Esophagus muscularis mucosa (tissue), 4 donors: ENCODE measurements at regions of chr10 and their contacts with region 1.

Region 1: DNA sequence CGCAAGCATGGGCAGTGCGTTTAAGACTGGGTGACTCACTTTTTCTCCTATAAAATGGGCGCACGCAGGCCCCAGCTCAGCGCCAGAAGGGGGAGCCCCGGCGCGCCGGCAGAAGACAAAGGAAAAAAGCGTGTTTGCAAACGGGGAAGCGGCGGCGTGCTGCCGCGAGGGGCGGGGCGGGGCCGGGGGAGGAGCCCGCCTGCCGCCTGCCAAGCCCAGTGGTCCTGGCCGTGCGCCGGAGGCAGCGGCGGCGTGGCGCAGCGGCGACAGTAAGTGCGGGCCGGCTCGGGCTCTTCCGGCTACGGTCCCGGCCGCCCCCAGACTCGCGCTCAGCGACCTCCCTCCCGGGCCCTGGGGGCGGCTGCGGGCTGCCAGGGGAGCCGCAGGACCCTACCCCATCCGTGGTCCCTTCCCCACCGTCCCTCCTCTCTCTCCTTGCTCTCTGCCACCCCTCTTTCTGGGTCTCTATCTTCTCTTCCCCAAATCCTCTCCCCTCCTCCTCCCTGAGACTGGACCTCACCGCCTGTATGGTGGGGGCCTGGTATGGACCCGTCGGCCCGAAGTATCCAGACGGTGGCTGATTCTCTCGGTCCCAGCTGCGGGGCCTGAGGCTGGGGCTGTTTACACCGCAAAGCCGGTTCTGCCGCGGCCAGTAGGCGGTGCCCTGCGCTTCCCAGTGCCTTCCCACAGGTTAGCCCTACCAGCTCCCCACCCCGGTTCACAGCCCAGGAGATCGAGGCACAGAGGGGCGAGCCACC is at the start of gene SLC29A3:
- DNase-seq: no peak
- H3K4me3 ChIP-seq: peak within 1 kb of the TSS; percentile 71 to 93 (median 84)
- H3K27ac ChIP-seq: peak within 1 kb of the TSS; percentile 81 to 87 (median 85)
- H3K4me1 ChIP-seq: peaks cover 14 to 29% (median 23%) of the 10 kb centered on the region in 4 donors
- H3K27me3 ChIP-seq: no peaks in the 10 kb centered on the region
- CTCF ChIP-seq: peak; percentile 53 to 70 (median 67)
- EP300 ChIP-seq: no peak
- POLR2A ChIP-seq: no peak
- total RNA-seq, gene SLC29A3: 4.0 to 6.9 (median 5.0) TPM

Region 2: GRCh38 chr10:71378336-71379117 is 59.3 kb after region 1 on chr10:
- intact Hi-C with region 1: loop called (anchors 5 kb)
- DNase-seq: no peak
- H3K4me3 ChIP-seq: no peak overlapping the region
- H3K27ac ChIP-seq: peak overlapping the region in 3 of 4 donors; percentile 1 to 88 (median 83)
- H3K4me1 ChIP-seq: peaks cover 6 to 16% (median 11%) of the 10 kb centered on the region in 4 donors
- H3K27me3 ChIP-seq: no peaks in the 10 kb centered on the region
- CTCF ChIP-seq: no peak
- EP300 ChIP-seq: no peak
- POLR2A ChIP-seq: no peak

Region 3: GRCh38 chr10:71569775-71570588 is 250.8 kb after region 1 on chr10:
- intact Hi-C with region 1: loop called (anchors 2 kb)
- DNase-seq: peak; percentile 94
- H3K4me3 ChIP-seq: no peak overlapping the region
- H3K27ac ChIP-seq: no peak overlapping the region
- H3K4me1 ChIP-seq: peaks cover 0 to 5% (median 2%) of the 10 kb centered on the region in 4 donors
- H3K27me3 ChIP-seq: no peaks in the 10 kb centered on the region
- CTCF ChIP-seq: peak; percentile 87 to 90 (median 88)
- EP300 ChIP-seq: no peak
- POLR2A ChIP-seq: no peak

Region 4: GRCh38 chr10:71771821-71772617 is 452.8 kb after region 1 on chr10:
- intact Hi-C with region 1: loop called (anchors 2 kb)
- DNase-seq: no peak
- H3K4me3 ChIP-seq: peak overlapping the region; percentile 76 to 95 (median 85)
- H3K27ac ChIP-seq: peak overlapping the region; percentile 94 to 98 (median 96)
- H3K4me1 ChIP-seq: peaks cover 74 to 94% (median 85%) of the 10 kb centered on the region in 4 donors
- H3K27me3 ChIP-seq: no peaks in the 10 kb centered on the region
- CTCF ChIP-seq: no peak
- EP300 ChIP-seq: no peak
- POLR2A ChIP-seq: peak; percentile 28

Region 5: GRCh38 chr10:71893920-71894319 is 574.7 kb after region 1 on chr10:
- intact Hi-C with region 1: loop called (anchors 10 kb)
- DNase-seq: no peak
- H3K4me3 ChIP-seq: no peak overlapping the region
- H3K27ac ChIP-seq: no peak overlapping the region
- H3K4me1 ChIP-seq: peaks cover 9 to 17% (median 14%) of the 10 kb centered on the region in 4 donors
- H3K27me3 ChIP-seq: no peaks in the 10 kb centered on the region
- CTCF ChIP-seq: no peak
- EP300 ChIP-seq: no peak
- POLR2A ChIP-seq: no peak